ENCODE measurements at regions of chr3 and their contacts with region 1.

Region 1: GRCh38 chr3:190424478-190425439 is 24.9 kb downstream of the TMEM207 start:
- DNase-seq: peak; percentile 74
- ATAC-seq: peak; percentile 34

Region 2: GRCh38 chr3:189961525-189962161 is 463.1 kb before region 1 on chr3:
- intact Hi-C with region 1: loop called (anchors 10 kb)
- DNase-seq: no peak
- ATAC-seq: peak; percentile 57

Measured in Right ventricle myocardium inferior (tissue), 1 donor.